Heart left ventricle (tissue), 16 donors: ENCODE measurements at regions of chr14 and their contacts with region 1.

Region 1: GRCh38 chr14:23929822-23930294 is 23.7 kb upstream of the DHRS4 start:
- DNase-seq: peak; percentile 73 to 78 (median 76)
- ATAC-seq: peak; percentile 42 to 89 (median 82)
- H3K4me3 ChIP-seq: no peak overlapping the region
- H3K27ac ChIP-seq: no peak overlapping the region
- H3K4me1 ChIP-seq: peaks cover 0 to 12% (median 0%) of the 10 kb centered on the region in 12 donors
- H3K27me3 ChIP-seq: no peaks in the 10 kb centered on the region
- CTCF ChIP-seq: peak; percentile 82 to 96 (median 90)
- POLR2A ChIP-seq: no peak

Region 2: DNA sequence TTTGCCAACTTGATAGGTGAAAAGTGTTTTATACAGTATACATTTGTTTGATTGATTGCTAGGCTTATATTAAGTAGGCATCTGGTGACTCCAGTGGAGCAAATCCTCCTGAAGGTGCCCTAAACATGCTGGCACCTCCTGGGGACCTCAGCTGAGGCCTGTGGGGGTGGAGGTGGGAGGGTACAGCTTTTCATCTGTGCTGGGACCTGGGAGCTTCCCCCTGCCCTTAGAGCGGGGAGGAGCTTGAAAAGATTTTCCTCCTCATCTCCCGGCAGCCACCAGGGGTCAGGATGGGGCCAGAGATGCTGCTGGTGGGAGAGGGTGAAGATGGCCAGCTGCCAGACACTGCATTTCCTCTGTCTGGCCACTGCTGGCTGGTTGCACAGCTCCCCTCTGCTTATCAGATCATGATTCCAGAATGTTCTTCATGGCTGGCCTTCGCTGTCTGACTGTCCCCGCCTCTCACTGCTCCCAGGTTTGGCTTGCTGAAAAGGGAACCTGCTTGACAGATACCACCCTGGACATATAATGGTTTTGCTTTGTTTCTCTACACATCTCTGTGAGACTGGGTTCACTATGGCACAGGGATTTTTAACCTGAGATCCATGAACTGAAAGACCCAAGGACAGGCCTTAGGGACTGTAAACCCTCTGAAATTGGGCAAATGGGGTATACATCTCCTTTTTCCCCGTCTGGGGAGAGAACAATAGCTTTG is 340.8 kb before region 1 on chr14:
- intact Hi-C with region 1: loop called in 4 of 10 experiments (anchors 1 to 5 kb)
- DNase-seq: peak; percentile 84 to 92 (median 87)
- ATAC-seq: peak; percentile 82 to 96 (median 91)
- H3K4me3 ChIP-seq: no peak overlapping the region
- H3K27ac ChIP-seq: no peak overlapping the region
- H3K4me1 ChIP-seq: peaks cover 0 to 7% (median 2%) of the 10 kb centered on the region in 12 donors
- H3K27me3 ChIP-seq: peaks cover 0 to 6% (median 0%) of the 10 kb centered on the region in 9 donors
- CTCF ChIP-seq: peak; percentile 58 to 76 (median 68)
- POLR2A ChIP-seq: no peak

Region 3: GRCh38 chr14:23631702-23632460 is 298.0 kb before region 1 on chr14:
- intact Hi-C with region 1: loop called (anchors 1 to 5 kb)
- DNase-seq: peak; percentile 62 to 81 (median 77)
- ATAC-seq: peak; percentile 86 to 94 (median 90)
- H3K4me3 ChIP-seq: peak overlapping the region in 6 of 12 donors; percentile 8 to 39 (median 27)
- H3K27ac ChIP-seq: peak overlapping the region in 2 of 12 donors; percentile 33 to 54
- H3K4me1 ChIP-seq: peaks cover 0 to 14% (median 6%) of the 10 kb centered on the region in 12 donors
- H3K27me3 ChIP-seq: no peaks in the 10 kb centered on the region
- CTCF ChIP-seq: peak; percentile 87 to 97 (median 94)
- POLR2A ChIP-seq: no peak

Region 4: GRCh38 chr14:23727566-23728335 is 202.1 kb before region 1 on chr14:
- intact Hi-C with region 1: loop called in 5 of 10 experiments (anchors 2 to 10 kb)
- DNase-seq: no peak
- ATAC-seq: peak; percentile 65 to 79 (median 67)
- H3K4me3 ChIP-seq: no peak overlapping the region
- H3K27ac ChIP-seq: no peak overlapping the region
- H3K4me1 ChIP-seq: no peaks in the 10 kb centered on the region
- H3K27me3 ChIP-seq: no peaks in the 10 kb centered on the region
- CTCF ChIP-seq: peak in 10 of 12 donors; percentile 10 to 37 (median 30)
- POLR2A ChIP-seq: no peak